A549 (cell line): ENCODE measurements at regions of chr9 and their contacts with region 1.

Region 1: DNA sequence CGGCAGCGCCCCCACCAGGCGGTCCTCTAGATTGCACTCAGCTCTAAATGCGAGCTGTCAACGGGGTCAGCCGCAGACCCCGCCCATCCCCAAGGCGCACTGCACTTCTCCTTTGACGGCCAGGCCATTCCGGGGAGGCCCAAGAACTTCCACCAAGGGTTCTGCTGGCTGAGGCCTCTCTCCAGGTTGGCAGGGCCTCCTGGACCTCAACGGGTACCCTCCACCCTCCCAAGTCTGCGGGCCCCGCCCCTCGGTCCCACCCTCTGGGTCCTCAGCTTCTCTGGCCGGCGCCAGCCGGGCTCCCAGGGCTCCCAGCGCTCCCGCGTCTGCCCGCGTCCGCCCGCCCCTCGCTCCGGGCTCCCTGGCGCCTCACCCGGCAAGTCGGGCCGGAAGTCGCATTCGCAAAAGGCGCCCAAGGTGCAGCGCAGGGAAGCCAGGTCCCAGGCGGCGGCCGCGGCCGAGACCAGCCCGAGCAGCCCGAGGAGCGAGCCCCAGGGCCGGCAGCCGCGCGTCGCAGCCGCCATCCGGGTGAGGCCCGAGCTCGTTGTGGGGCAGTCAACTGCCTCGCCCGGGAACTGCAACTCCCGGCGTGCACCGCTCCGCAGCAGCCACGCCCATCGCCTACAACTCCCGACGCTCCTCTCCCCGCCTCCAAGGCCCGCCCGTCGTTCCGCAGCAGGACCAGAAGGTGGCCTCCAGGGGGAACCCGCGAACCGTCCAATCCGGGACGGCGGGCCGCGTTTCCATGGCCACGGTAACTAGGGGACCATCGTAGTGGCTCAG is at the start of gene TOR2A:
- DNase-seq: peak; percentile 91 to 97
- ATAC-seq: peak; percentile 92 to 95
- H3K4me3 ChIP-seq: peak within 1 kb of the TSS; percentile 72
- H3K27ac ChIP-seq: peak within 1 kb of the TSS; percentile 96
- H3K4me1 ChIP-seq: peaks cover 12% of the 10 kb centered on the region
- CTCF ChIP-seq: peak; percentile 90
- EP300 ChIP-seq: no peak; a peak in 1 of 5 replicates
- POLR2A ChIP-seq: peak; percentile 78
- RAD21 ChIP-seq: peak; percentile 98
- polyA plus RNA-seq, gene TOR2A: 4.9 and 5.5 TPM in 2 replicates

Region 2: DNA sequence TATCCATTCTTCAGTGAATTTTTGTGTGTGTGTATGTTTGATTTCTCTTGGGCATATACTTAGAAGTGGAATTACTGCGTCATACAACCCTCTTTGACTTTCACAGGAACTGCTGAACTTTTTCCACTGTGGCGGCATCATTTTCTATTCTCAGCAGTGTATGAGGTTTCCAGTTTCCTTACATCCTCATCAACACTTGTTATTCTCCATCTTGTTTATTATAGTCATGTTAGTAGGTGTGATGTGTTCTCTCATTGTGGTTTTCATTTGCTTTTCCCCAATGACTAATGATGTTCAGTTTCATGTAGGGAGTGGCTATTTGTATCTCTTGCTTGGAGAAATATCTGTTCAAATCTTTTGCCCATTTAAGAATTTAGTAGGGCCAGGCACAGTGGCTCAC is 308.2 kb before region 1 on chr9:
- CTCF ChIA-PET with region 1: no interaction called
- POLR2A ChIA-PET with region 1: no interaction called
- DNase-seq: no peak
- ATAC-seq: no peak
- H3K4me3 ChIP-seq: no peak overlapping the region
- H3K27ac ChIP-seq: no peak overlapping the region
- H3K4me1 ChIP-seq: peaks cover 10% of the 10 kb centered on the region; the same call in 2 of the 3 replicates
- CTCF ChIP-seq: no peak
- EP300 ChIP-seq: no peak
- POLR2A ChIP-seq: no peak
- RAD21 ChIP-seq: no peak

Region 3: DNA sequence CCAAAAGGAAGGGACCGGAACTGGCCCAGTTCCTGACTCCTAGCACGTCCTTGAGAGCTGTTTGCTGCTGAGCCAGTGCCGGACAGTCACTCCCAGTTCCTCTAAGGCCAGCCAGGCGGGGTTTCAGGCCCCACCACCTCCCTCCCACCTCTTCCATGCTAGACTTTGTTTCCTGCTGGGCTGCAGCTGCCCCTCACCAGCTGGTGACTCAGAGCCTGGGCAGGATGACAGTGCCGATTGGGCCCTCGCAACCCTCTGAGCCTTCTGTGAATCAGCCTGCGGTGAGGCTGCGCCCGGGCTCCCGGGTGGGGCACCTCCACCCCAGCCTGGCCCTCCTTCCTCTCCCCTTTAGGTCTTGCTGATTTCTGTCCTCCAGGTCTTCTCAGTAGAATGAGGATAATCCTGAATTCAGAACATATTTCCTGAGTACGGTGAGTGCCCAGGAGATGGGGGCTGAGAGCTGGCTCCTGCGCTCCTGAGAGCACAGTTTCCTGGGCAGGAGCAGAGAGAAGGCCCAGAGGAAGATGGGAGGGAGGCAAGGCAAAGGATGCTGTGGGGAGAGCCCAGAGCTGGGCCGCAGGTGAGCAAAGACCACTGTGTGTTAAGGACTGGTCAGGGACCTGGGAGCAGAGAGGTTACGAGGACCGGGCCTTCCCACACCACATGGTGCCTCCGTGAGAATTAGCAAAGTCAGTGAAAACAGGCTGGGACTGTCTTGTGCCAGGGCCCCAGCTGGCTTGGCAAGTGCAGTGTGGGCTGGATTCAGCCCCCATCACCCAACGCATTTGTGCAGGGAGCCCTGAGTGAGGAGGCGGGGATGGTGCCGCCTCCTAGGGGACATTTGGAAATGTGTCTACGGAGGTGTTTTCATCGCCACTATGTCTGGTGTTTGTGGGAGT is 155.7 kb before region 1 on chr9:
- CTCF ChIA-PET with region 1: interaction called, 243 read pairs
- POLR2A ChIA-PET with region 1: no interaction called
- DNase-seq: peak; percentile 87 to 93
- ATAC-seq: peak; percentile 93
- H3K4me3 ChIP-seq: peak overlapping the region; percentile 52
- H3K27ac ChIP-seq: peak overlapping the region; percentile 92 to 100
- H3K4me1 ChIP-seq: peaks cover 70% of the 10 kb centered on the region
- CTCF ChIP-seq: peak; percentile 50
- EP300 ChIP-seq: peak in 1 of 2 experiments; percentile 44; a peak in 1 of 5 replicates
- POLR2A ChIP-seq: peak; percentile 57; the same call in 1 of the 2 replicates
- RAD21 ChIP-seq: peak; percentile 54 to 63

Region 4: GRCh38 chr9:127679506-127679905 is 55.4 kb before region 1 on chr9:
- CTCF ChIA-PET with region 1: interaction called, 21 read pairs
- POLR2A ChIA-PET with region 1: no interaction called
- DNase-seq: no peak
- ATAC-seq: no peak
- H3K4me3 ChIP-seq: no peak overlapping the region
- H3K27ac ChIP-seq: no peak overlapping the region
- H3K4me1 ChIP-seq: peaks cover 2% of the 10 kb centered on the region; the same call in 2 of the 3 replicates
- CTCF ChIP-seq: no peak
- EP300 ChIP-seq: no peak
- POLR2A ChIP-seq: no peak
- RAD21 ChIP-seq: no peak

Region 5: DNA sequence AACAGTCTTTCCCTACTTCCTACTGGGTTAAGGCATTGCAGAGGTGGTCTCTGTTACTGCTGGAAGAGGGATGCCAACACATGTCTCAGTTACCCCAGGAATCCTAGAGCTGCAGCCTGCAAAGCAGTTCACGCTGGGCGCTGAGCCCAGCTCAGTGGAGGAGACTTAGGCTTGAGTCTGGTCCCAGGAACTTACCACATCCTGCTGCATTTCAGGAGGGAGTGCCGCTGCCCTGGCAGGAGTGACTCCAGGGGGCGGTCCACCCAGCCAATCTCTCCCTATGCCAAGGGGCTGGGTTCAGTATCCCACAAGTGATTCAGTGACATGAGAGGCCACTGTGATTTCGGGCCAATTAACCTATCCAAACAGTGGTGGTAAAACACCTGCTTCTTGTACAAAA is 11.5 kb before region 1 on chr9:
- CTCF ChIA-PET with region 1: interaction called, 63 read pairs
- POLR2A ChIA-PET with region 1: no interaction called
- DNase-seq: no peak
- ATAC-seq: no peak
- H3K4me3 ChIP-seq: no peak overlapping the region
- H3K27ac ChIP-seq: no peak overlapping the region
- H3K4me1 ChIP-seq: peaks cover 25% of the 10 kb centered on the region
- CTCF ChIP-seq: no peak
- EP300 ChIP-seq: no peak
- POLR2A ChIP-seq: no peak
- RAD21 ChIP-seq: no peak

Region 6: DNA sequence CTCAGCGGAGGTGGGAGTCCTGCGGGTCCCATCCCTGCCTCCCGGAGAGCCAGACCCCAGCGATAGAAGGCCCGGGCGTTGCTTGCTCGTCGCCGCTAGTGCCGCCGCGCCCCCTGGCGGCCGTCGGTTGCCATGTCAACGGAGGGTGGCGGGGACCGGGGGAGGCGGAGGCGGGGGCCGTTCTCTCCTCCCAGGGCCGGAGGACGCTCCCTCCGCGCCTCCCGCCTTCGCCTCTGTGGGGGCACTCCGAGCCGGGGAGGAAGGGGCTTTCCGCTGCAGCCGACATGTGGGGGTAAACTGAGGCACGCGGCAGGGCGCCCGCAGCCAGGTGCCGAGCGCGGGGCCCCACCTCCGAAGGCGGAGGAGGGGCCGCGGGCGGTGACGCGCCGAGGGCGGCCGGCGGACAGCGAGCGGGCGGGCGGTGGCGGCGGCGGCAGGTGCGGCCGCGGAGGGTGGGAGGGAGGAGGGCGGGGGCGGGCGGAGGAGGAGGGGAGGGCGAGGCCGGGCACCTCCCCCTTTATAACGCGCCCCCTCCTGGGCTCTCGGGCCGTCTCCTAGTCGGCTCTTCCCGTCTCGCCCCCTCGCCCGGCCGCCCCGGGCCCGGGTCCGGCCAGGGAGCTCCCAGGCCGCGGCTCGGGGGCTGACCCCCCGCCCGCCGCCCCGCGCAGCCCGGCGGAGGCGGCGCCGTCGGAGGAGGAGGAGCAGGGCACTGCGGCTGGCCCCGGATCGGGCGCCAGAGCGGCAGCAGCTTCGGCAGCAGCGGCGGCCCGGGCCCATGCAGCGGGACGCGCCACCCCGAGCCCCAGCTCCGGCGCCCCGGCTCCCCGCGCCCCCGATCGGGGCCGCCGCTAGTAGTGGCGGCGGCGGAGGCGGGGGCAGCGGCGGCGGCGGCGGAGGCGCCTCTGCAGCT is 50.3 kb after region 1 on chr9:
- CTCF ChIA-PET with region 1: interaction called, 132 read pairs
- POLR2A ChIA-PET with region 1: interaction called, 12 read pairs
- DNase-seq: peak; percentile 85 to 92
- ATAC-seq: peak; percentile 72 to 77
- H3K4me3 ChIP-seq: peak overlapping the region; percentile 88
- H3K27ac ChIP-seq: peak overlapping the region; percentile 94 to 99
- H3K4me1 ChIP-seq: peaks cover 11% of the 10 kb centered on the region; the same call in 2 of the 3 replicates
- CTCF ChIP-seq: peak; percentile 90
- EP300 ChIP-seq: no peak
- POLR2A ChIP-seq: peak; percentile 28
- RAD21 ChIP-seq: peak; percentile 76 to 96

Region 7: DNA sequence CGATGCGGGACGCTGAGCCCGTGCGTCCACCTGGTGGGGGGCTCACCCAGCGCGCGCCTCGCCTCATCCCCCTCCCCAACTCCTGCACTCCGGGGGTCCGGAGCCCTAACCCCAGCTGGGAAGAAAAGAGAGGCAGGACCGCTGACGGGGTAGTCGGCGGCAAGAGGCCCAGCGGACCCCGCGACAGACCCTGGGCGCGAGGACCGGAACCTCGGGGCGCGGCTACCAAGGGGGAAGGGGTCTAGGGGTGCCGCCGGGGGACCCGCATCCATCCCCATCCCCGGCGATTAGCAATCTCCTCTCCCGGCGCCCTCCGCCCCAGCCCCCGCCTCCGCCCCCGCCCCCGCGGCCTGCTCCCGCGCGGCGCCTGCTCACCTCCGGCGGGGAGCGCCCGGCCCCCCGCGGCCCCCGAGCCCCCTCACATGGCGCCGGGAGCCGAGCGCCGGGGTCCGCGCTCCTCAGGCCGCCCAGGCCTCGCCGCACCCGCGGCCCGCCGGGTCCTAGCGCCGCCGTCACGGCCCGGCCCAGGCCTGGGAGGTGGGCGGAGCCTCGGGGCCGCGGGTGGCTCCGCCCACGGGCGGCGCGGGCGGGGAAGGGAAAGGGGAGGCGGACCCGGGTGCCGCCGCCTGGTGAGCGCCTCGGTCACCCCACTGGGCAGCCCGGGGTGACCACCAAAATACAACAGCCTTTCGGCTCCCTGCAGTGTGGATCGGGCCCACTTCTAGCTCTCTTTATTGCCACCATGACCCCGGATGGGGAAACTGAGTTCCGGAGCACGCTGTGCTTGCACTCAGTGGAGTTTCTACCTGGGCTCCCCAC is 164.4 kb after region 1 on chr9 and contains the start of gene ST6GALNAC6:
- CTCF ChIA-PET with region 1: interaction called, 11 read pairs
- POLR2A ChIA-PET with region 1: no interaction called
- DNase-seq: peak; percentile 65 to 69
- ATAC-seq: peak; percentile 74
- H3K4me3 ChIP-seq: peak within 1 kb of the TSS; percentile 76
- H3K27ac ChIP-seq: peak within 1 kb of the TSS; percentile 85 to 94
- H3K4me1 ChIP-seq: peaks cover 33% of the 10 kb centered on the region
- CTCF ChIP-seq: no peak
- EP300 ChIP-seq: no peak
- POLR2A ChIP-seq: peak; percentile 36
- RAD21 ChIP-seq: no peak
- polyA plus RNA-seq, gene ST6GALNAC6: 8.2 and 14.7 TPM in 2 replicates